ENCODE measurements at regions of chr20 and their contacts with region 1.

Region 1: DNA sequence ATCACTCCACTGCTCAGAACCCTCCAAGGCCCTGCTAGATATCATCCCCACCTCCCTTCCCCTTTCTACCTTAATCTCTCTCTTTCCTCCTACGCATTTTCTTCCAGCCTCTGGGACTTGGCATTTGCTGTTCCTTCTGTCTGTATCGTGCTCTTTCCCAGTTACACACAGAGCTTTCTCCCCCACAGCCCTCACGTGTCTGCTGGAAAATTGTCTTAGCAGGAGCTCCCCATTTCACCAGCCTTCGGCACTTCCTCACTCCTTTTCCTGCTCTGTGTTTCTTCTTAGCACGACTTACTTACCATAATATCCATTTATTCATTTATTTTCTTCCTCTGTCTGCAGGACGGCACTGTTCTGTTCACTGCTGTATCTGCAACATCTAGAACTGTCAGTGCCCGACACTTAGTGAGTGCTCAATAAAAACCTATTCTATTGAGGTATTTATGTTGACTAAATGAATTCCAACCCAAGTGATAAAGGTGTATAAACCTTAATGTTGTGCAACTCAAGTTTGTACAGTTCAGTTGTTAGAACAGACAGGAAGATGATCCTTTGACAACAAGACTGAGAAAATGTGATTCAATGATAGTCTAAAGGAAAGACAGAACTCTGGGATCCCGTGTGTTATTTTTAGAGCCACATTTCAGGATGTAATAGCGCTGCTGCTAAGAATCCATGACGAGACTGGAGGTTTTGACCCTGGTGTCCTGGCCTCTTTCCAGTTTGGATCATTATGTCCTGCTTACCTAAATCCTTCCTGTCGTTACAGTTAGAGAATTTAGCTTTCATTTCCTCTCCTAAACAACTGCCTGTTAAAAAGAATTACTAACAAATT is 170.1 kb upstream of the LAMP5 start:
- DNase-seq: peak; percentile 64
- H3K4me3 ChIP-seq: no peak overlapping the region
- H3K27ac ChIP-seq: no peak overlapping the region
- H3K4me1 ChIP-seq: peaks cover 19% of the 10 kb centered on the region
- H3K27me3 ChIP-seq: no peaks in the 10 kb centered on the region
- CTCF ChIP-seq: no peak
- POLR2A ChIP-seq: no peak

Region 2: GRCh38 chr20:9156529-9157280 is 187.6 kb before region 1 on chr20:
- CTCF ChIA-PET with region 1: no interaction called
- POLR2A ChIA-PET with region 1: no interaction called
- dilution Hi-C with region 1: no loop called
- intact Hi-C with region 1: no loop called
- DNase-seq: no peak
- H3K4me3 ChIP-seq: no peak overlapping the region
- H3K27ac ChIP-seq: no peak overlapping the region
- H3K4me1 ChIP-seq: no peaks in the 10 kb centered on the region
- H3K27me3 ChIP-seq: no peaks in the 10 kb centered on the region
- CTCF ChIP-seq: no peak
- POLR2A ChIP-seq: no peak

Region 3: DNA sequence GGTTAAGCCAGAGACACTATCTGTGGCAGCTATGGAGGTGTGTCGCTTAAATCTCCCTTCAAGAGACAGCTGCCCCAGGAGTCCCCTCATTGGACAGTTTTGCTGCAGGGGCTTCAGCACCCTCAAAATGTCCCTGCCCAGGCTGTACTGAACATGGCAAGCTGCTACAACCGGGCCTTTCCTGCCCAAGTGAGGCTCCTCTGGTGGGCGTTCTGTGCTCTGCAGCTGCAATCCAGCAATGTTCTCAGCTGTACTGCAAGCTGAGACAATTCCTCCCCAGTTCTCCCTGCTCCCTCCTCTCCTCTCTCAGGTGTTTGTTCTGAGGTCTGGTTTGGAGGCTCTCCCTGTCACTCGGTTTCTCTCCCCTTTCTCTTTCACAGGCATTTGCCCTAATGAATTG is 20.7 kb before region 1 on chr20:
- CTCF ChIA-PET with region 1: interaction called, 3 read pairs
- POLR2A ChIA-PET with region 1: no interaction called
- dilution Hi-C with region 1: no loop called
- intact Hi-C with region 1: loop called (anchors 2 kb)
- DNase-seq: no peak
- H3K4me3 ChIP-seq: no peak overlapping the region
- H3K27ac ChIP-seq: no peak overlapping the region
- H3K4me1 ChIP-seq: no peaks in the 10 kb centered on the region
- H3K27me3 ChIP-seq: no peaks in the 10 kb centered on the region
- CTCF ChIP-seq: peak; percentile 27 to 54
- POLR2A ChIP-seq: no peak

Measured in endothelial cell of umbilical vein (primary cell).